Adrenal gland (tissue), 19 donors: ENCODE measurements at regions of chr3 and their contacts with region 1.

Region 1: GRCh38 chr3:45037734-45038455 is 11.8 kb downstream of the CLEC3B start:
- DNase-seq: peak; percentile 92 to 99 (median 96)
- H3K4me3 ChIP-seq: peak overlapping the region in 1 of 4 donors; percentile 13
- H3K27ac ChIP-seq: no peak overlapping the region
- H3K4me1 ChIP-seq: peaks cover 0 to 30% of the 10 kb centered on the region in 2 donors
- H3K27me3 ChIP-seq: no peaks in the 10 kb centered on the region
- CTCF ChIP-seq: peak; percentile 77 to 99 (median 98)
- POLR2A ChIP-seq: no peak

Region 2: GRCh38 chr3:44529927-44530326 is 508.0 kb before region 1 on chr3:
- intact Hi-C with region 1: loop called (anchors 5 to 10 kb)
- DNase-seq: peak in 1 of 7 donors; percentile 5
- H3K4me3 ChIP-seq: no peak overlapping the region
- H3K27ac ChIP-seq: no peak overlapping the region
- H3K4me1 ChIP-seq: no peaks in the 10 kb centered on the region
- H3K27me3 ChIP-seq: no peaks in the 10 kb centered on the region
- CTCF ChIP-seq: no peak
- POLR2A ChIP-seq: no peak

Region 3: DNA sequence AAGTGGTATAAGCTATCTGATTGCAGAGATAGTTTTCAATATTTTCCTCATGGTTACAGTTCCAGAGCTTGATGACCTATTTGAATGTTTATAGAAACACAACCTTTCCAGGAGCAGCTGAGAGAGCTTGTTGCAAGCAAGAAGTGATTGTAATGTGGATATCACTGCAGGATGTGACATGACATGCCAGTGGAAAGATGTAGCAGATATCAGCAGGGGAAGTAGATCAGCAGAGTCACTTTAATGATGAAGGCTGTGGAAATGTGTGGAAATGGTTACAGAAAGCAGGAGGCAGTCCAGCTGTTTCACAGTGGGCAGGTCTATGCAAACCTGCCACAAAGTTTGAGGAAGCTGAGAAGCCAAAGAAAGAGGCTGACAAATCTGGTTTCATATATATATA is 167.2 kb after region 1 on chr3:
- intact Hi-C with region 1: loop called in 1 of 2 experiments (anchors 5 kb)
- DNase-seq: no peak
- H3K4me3 ChIP-seq: no peak overlapping the region
- H3K27ac ChIP-seq: no peak overlapping the region
- H3K4me1 ChIP-seq: peaks cover under 1 to 3% of the 10 kb centered on the region in 2 donors
- H3K27me3 ChIP-seq: no peaks in the 10 kb centered on the region
- CTCF ChIP-seq: no peak
- POLR2A ChIP-seq: no peak

Region 4: DNA sequence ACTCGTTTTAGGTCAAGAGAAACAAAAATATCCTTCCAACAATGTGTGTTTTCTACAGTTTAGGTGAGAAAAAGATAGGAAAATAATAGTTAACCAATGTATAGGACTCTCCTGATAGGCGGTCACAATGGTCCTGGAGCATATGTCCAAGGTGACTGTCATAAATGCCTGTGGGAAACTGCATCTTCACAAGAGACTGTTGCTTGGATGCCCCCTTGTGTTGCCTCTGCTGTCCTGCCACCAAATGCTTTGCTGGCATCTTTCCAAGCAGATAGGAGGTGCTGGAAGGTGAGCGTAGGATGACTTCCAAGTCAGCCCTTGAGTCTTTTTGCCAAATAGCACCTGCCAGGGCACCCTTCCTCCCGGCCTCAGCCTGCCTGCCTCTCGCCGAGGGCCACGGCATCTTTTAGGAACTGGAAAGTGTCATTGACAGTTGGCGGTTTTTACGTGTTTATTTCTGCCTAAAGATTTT is 627.2 kb after region 1 on chr3:
- intact Hi-C with region 1: loop called in 1 of 2 experiments (anchors 5 kb)
- DNase-seq: peak; percentile 47 to 81 (median 65)
- H3K4me3 ChIP-seq: peak overlapping the region in 1 of 4 donors; percentile 23
- H3K27ac ChIP-seq: no peak overlapping the region
- H3K4me1 ChIP-seq: peaks cover 11 to 37% of the 10 kb centered on the region in 2 donors
- H3K27me3 ChIP-seq: no peaks in the 10 kb centered on the region
- CTCF ChIP-seq: peak; percentile 33 to 67 (median 52)
- POLR2A ChIP-seq: no peak